A549 (cell line): ENCODE measurements at regions of chr2 and their contacts with region 1.

Region 1: DNA sequence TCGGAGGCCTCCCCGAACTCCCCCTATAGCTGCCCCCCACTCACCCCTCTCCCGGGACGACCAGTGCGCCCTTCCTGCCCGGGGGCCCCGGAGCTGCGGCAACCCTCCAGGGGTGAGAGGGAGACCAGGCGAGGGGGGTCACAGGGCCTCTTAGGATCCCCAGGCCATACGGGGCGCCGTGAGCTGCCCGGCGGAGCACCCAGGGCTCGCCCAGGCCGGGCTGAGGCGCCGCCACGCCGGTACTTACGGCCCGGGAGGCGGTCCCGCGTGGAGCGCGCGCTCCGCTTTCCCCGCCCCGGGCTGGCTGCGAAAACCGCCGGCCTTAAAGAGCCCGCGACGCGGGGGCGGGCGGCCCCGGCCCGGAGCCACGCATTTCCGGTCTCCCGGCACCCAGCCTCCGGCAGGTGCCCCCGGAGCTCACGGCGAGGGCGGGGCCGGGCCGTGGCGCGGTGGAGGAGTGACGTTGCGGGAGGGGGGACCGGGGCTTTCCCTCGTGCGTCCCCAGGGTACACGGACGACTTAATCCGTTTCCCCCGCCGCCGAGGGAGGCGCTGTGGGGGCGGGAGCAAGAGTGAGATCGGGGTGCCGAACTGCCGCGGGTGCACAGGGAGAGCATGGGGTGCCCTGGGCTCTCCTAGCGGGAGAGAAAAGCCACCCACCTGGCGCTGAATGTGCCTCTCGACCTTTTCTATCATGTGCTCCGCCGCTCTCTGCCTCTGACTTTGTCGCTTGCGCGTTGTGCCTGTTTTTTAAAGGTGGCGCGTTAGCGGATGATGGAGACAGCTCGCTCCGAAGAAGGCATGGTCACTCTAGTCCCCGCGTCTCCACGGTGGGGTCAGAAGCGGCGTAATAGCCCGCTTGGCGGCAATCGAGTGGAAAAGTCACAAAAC is at the start of gene METTL21A:
- DNase-seq: peak; percentile 92 to 93
- ATAC-seq: peak; percentile 77 to 80
- H3K4me3 ChIP-seq: peak within 1 kb of the TSS; percentile 82
- H3K27ac ChIP-seq: peak within 1 kb of the TSS; percentile 98 to 99
- H3K4me1 ChIP-seq: peaks cover 13% of the 10 kb centered on the region
- CTCF ChIP-seq: peak; percentile 43; the same call in 2 of the 3 replicates
- EP300 ChIP-seq: no peak
- POLR2A ChIP-seq: peak; percentile 80
- RAD21 ChIP-seq: no peak; a peak in 1 of 5 replicates
- polyA plus RNA-seq, gene METTL21A: 31.1 and 40.1 TPM in 2 replicates

Region 2: GRCh38 chr2:207328944-207329386 is 296.3 kb before region 1 on chr2:
- CTCF ChIA-PET with region 1: no interaction called
- POLR2A ChIA-PET with region 1: no interaction called
- DNase-seq: no peak
- ATAC-seq: no peak
- H3K4me3 ChIP-seq: no peak overlapping the region
- H3K27ac ChIP-seq: peak overlapping the region; percentile 71 to 81; a peak in 5 of 6 replicates
- H3K4me1 ChIP-seq: peaks cover 50% of the 10 kb centered on the region
- CTCF ChIP-seq: no peak
- EP300 ChIP-seq: no peak
- POLR2A ChIP-seq: no peak
- RAD21 ChIP-seq: no peak

Region 3: GRCh38 chr2:207662203-207662602 is 36.9 kb after region 1 on chr2:
- CTCF ChIA-PET with region 1: interaction called, 18 read pairs
- POLR2A ChIA-PET with region 1: no interaction called
- DNase-seq: no peak
- ATAC-seq: 0 out of 6 replicates have a peak, but pooled peaks of 1 of the 2 experiments have one; percentile 27
- H3K4me3 ChIP-seq: no peak overlapping the region
- H3K27ac ChIP-seq: no peak overlapping the region
- H3K4me1 ChIP-seq: peaks cover 6% of the 10 kb centered on the region; the same call in 2 of the 3 replicates
- CTCF ChIP-seq: no peak
- EP300 ChIP-seq: no peak
- POLR2A ChIP-seq: no peak
- RAD21 ChIP-seq: no peak

Region 4: DNA sequence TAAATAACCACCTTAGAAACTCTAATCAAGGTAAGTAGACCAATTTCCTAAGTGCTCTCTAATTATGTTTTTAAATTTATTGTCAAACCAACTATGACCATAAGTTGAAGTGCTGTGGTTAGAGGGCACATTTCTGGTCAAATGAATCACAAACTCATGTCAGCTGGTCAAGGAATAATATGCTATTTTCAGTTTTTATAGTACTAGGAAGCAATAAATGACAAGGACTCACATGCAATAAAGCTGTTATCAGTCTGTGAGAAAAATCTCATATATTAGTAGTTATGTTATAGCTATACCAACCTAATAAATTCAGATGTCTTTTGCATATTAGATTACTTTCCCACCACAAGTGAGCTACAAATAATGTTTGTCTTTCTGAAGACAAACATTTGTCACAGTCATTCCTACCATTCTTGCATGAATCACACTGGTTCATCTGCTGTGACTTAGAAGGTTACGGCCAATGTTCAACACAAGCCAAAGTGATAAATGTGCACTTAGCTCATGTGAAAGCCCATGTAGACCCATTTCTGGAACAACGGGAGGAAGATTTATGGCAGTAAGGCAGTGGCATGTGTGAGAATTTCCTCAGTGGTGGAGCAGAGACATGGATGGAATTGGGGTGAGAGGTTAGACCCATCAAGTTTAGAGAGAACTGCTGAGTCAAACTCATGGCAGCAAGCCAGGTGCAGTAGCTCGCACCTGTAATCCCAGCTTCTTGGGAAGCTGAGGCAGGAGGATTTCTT is 58.8 kb after region 1 on chr2:
- CTCF ChIA-PET with region 1: interaction called, 8 read pairs
- POLR2A ChIA-PET with region 1: interaction called, 13 read pairs
- DNase-seq: peak; percentile 60 to 96
- ATAC-seq: peak; percentile 96
- H3K4me3 ChIP-seq: no peak overlapping the region
- H3K27ac ChIP-seq: peak overlapping the region; percentile 82 to 92
- H3K4me1 ChIP-seq: peaks cover 32% of the 10 kb centered on the region
- CTCF ChIP-seq: no peak
- EP300 ChIP-seq: peak; percentile 48 to 75; a peak in 3 of 5 replicates
- POLR2A ChIP-seq: no peak
- RAD21 ChIP-seq: no peak

Region 5: GRCh38 chr2:207704078-207704477 is 78.8 kb after region 1 on chr2:
- CTCF ChIA-PET with region 1: interaction called, 66 read pairs
- POLR2A ChIA-PET with region 1: no interaction called
- DNase-seq: no peak
- ATAC-seq: peak in 1 of 2 experiments; percentile 14; a peak in 2 of 6 replicates
- H3K4me3 ChIP-seq: no peak overlapping the region
- H3K27ac ChIP-seq: 0 out of 6 replicates have a peak overlapping the region, but pooled peaks of 1 of the 2 experiments have one; percentile 10
- H3K4me1 ChIP-seq: peaks cover 13% of the 10 kb centered on the region
- CTCF ChIP-seq: no peak
- EP300 ChIP-seq: no peak
- POLR2A ChIP-seq: no peak
- RAD21 ChIP-seq: no peak

Region 6: DNA sequence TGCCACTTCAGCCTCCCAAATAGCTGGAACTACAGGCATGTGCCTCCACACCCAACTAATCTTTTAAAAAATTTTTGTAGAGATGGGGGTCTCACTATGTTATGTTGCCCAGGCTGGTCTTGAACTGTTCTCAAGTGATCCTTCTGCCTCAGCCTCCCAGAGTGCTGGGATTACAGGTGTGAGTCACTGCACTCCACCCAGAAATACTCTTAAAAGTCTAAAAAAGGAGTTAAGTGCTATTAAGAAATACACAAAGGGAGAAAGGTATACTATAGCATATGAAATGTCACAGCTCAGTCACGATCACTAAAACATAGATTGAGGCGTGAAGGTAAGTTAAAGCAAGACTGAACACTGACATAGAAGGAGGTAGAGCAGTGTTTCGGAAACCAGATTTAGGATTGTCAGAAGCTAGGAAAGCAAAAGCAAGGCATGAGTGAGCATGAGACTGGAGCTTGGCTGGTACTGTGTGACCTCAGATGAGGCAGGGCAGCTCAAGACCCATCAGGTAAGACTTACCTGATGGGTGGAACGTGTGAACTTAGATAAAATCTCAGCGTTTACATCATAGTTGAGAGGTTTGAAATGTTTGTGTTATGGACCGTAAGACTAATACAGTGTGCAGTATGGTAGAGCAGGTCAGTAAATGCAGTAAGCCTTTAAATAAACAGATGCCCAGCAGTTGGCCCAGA is 95.4 kb after region 1 on chr2:
- CTCF ChIA-PET with region 1: interaction called, 54 read pairs
- POLR2A ChIA-PET with region 1: interaction called, 7 read pairs
- DNase-seq: no peak
- ATAC-seq: peak; percentile 26 to 30; a peak in 3 of 6 replicates
- H3K4me3 ChIP-seq: no peak overlapping the region
- H3K27ac ChIP-seq: peak overlapping the region in 1 of 2 experiments; percentile 47; a peak in 1 of 6 replicates
- H3K4me1 ChIP-seq: peaks cover 73% of the 10 kb centered on the region
- CTCF ChIP-seq: no peak
- EP300 ChIP-seq: no peak
- POLR2A ChIP-seq: no peak
- RAD21 ChIP-seq: no peak

Region 7: DNA sequence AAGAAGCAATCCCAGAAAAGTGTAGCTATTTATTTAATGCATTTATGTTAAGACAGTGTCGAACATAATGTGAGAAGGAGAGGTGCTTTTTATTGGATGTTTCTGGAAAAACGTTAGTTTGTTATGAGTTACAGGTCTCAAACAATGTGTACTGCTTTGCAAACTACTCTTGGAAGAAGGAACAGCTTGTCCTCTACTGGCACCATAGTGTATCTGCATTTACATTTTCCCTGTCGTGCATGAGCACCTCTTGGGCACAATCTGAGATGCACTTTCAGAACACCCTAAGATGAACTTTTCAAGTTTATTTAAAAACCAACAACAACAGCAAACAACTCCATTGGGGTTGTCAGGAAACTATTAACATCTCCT is 109.0 kb after region 1 on chr2:
- CTCF ChIA-PET with region 1: interaction called, 110 read pairs
- POLR2A ChIA-PET with region 1: interaction called, 7 read pairs
- DNase-seq: peak in 1 of 2 experiments; percentile 75
- ATAC-seq: peak; percentile 97 to 99
- H3K4me3 ChIP-seq: no peak overlapping the region
- H3K27ac ChIP-seq: peak overlapping the region in 1 of 2 experiments; percentile 9; a peak in 1 of 6 replicates
- H3K4me1 ChIP-seq: peaks cover 27% of the 10 kb centered on the region
- CTCF ChIP-seq: peak; percentile 83
- EP300 ChIP-seq: no peak
- POLR2A ChIP-seq: no peak
- RAD21 ChIP-seq: peak; percentile 87 to 91